GM12878 (cell line): ENCODE measurements at regions of chr5 and their contacts with region 1.

Region 1: GRCh38 chr5:131589510-131590348 is 45.3 kb downstream of the RAPGEF6 start:
- DNase-seq: peak; percentile 23
- ATAC-seq: peak; percentile 84
- H3K4me3 ChIP-seq: no peak overlapping the region
- H3K27ac ChIP-seq: no peak overlapping the region
- H3K4me1 ChIP-seq: peaks cover 2% of the 10 kb centered on the region; the same call in 1 of the 2 replicates
- H3K27me3 ChIP-seq: no peaks in the 10 kb centered on the region
- CTCF ChIP-seq: peak; percentile 83 to 85 (median 83)
- EP300 ChIP-seq: no peak
- POLR2A ChIP-seq: no peak
- RAD21 ChIP-seq: peak; percentile 96

Region 2: GRCh38 chr5:131431794-131432193 is 157.9 kb before region 1 on chr5:
- CTCF ChIA-PET with region 1: no interaction called
- POLR2A ChIA-PET with region 1: no interaction called
- RAD21 ChIA-PET with region 1: no interaction called
- SMC1A ChIA-PET with region 1: no interaction called
- in situ Hi-C with region 1: no loop called
- intact Hi-C with region 1: no loop called
- DNase-seq: no peak
- ATAC-seq: no peak
- H3K4me3 ChIP-seq: no peak overlapping the region
- H3K27ac ChIP-seq: no peak overlapping the region
- H3K4me1 ChIP-seq: no peaks in the 10 kb centered on the region
- H3K27me3 ChIP-seq: no peaks in the 10 kb centered on the region
- CTCF ChIP-seq: no peak
- EP300 ChIP-seq: no peak
- POLR2A ChIP-seq: no peak
- RAD21 ChIP-seq: no peak

Region 3: GRCh38 chr5:131564229-131564652 is 25.5 kb before region 1 on chr5:
- CTCF ChIA-PET with region 1: interaction called, 16 read pairs
- POLR2A ChIA-PET with region 1: interaction called, 3 read pairs
- RAD21 ChIA-PET with region 1: no interaction called
- SMC1A ChIA-PET with region 1: interaction called, 4 read pairs
- in situ Hi-C with region 1: no loop called
- intact Hi-C with region 1: no loop called
- DNase-seq: no peak
- ATAC-seq: no peak
- H3K4me3 ChIP-seq: no peak overlapping the region
- H3K27ac ChIP-seq: no peak overlapping the region
- H3K4me1 ChIP-seq: no peaks in the 10 kb centered on the region
- H3K27me3 ChIP-seq: no peaks in the 10 kb centered on the region
- CTCF ChIP-seq: no peak
- EP300 ChIP-seq: no peak
- POLR2A ChIP-seq: no peak
- RAD21 ChIP-seq: no peak

Region 4: DNA sequence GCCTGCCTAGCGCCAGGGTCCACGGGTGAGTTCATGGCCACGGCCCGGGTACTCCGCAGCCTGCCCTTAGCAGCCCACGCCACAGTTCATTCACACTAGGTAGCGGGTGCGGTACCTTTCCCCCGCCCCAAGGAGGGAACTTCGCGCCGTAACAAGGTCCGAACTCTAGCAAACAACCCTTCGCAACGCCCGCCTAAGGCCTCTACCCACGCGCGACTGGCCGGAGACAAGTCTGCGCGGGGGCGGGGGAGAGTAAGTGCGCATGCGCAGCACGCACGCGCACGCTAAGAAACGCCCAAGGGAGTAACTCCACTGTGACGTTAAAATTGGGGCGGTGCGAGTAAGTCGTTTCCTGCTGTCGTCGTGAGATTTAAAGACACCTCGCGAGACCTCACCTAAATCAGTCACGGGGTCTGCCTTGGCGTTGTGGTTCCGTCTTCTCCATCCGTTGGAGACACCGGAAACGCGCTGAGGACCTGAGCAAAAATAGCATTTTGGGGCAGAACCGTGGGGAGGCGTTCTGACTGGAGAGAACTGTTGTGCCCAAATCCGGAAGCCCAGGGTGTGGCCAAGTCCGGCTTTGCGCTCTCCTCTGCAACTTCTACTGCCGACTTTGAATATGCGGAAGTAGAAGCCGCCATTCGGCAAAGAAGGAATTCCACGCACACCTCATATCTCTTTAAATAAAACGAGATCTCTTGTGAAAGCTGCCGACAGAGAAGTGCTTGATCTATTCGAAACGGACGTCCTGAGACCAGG is 45.4 kb after region 1 on chr5 and contains the start of gene RAPGEF6:
- CTCF ChIA-PET with region 1: interaction called, 36 read pairs
- POLR2A ChIA-PET with region 1: interaction called, 9 read pairs
- RAD21 ChIA-PET with region 1: interaction called, 16 read pairs
- SMC1A ChIA-PET with region 1: interaction called, 24 read pairs
- in situ Hi-C with region 1: no loop called
- intact Hi-C with region 1: no loop called
- DNase-seq: peak; percentile 100
- ATAC-seq: peak; percentile 90
- H3K4me3 ChIP-seq: peak within 1 kb of the TSS; percentile 93
- H3K27ac ChIP-seq: peak within 1 kb of the TSS; percentile 98
- H3K4me1 ChIP-seq: peaks cover 20% of the 10 kb centered on the region
- H3K27me3 ChIP-seq: no peaks in the 10 kb centered on the region
- CTCF ChIP-seq: peak in 1 of 3 experiments; percentile 17; a peak in 1 of 6 replicates
- EP300 ChIP-seq: peak; percentile 49 to 80; a peak in 2 of 4 replicates
- POLR2A ChIP-seq: peak; percentile 90
- RAD21 ChIP-seq: 0 out of 2 replicates have a peak, but pooled peaks have one; percentile 7
- polyA plus RNA-seq, gene RAPGEF6: 2.9 to 4.9 TPM

Region 5: DNA sequence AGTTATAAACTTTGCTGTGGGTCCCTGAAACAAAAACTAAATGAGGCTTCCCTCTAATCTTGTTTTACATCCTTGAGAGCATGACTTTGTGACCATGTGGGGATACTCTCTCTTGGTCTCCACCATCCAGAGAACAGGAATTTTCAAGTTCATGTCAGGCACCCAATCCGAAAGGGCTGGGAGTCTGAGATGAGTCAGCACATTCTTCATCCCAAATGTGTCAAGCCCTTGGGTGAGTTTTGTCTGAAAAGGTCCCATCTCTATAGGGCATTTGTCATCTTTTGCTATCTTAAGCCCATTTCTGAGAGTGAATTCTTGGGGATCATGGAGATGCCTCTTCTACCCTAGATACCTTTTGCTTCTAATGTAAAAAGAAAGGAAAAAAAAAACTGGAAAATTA is 72.2 kb after region 1 on chr5:
- CTCF ChIA-PET with region 1: interaction called, 10 read pairs
- POLR2A ChIA-PET with region 1: no interaction called
- RAD21 ChIA-PET with region 1: interaction called, 5 read pairs
- SMC1A ChIA-PET with region 1: interaction called, 9 read pairs
- in situ Hi-C with region 1: no loop called
- intact Hi-C with region 1: no loop called
- DNase-seq: no peak
- ATAC-seq: no peak
- H3K4me3 ChIP-seq: no peak overlapping the region
- H3K27ac ChIP-seq: no peak overlapping the region
- H3K4me1 ChIP-seq: no peaks in the 10 kb centered on the region
- H3K27me3 ChIP-seq: no peaks in the 10 kb centered on the region
- CTCF ChIP-seq: no peak
- EP300 ChIP-seq: no peak
- POLR2A ChIP-seq: no peak
- RAD21 ChIP-seq: no peak

Region 6: DNA sequence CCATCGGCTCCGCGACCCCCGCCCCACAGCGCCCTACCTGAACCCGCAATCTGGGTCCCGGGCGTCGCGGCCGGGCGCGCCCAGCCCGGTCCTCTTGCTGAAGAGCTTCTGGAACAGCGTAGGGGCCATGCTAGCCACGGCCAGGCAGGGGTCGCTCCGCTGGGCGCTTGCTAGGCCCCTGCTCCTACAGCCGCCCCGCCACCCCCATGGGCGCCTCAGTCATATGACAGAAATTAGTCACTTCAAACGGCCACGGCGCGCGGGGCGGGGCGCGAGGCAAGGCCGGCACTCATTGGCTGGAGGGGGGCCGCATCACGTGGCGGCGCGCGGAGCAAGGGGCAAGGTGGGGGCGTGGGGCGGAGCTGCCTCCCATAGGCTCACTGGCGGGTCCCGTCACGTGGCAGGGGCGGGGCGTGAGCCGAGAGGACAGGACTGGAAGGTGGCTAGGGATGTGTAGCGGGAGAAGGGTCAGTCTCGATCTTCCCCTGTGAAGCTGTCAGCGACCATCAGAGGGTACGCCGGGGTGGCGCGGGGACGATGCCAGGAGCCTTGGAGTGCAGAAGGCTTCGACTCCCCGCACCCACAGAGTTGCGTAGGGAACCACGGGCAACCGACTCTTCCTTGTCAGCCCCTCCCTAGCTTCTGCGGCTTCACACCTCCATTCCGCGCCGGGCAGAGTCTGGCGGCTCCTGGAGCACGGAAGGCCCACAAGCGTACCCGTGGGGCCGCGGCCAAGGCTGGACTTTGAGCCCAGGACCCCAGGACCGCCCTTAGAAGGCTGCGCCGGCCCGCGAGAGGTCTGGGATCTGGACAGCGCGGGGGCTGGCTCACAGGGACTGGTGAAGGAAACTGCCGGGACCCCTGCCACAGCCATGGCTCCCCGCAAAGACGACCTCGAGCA is 207.3 kb after region 1 on chr5 and contains the start of gene FNIP1:
- CTCF ChIA-PET with region 1: interaction called, 6 read pairs
- POLR2A ChIA-PET with region 1: no interaction called
- RAD21 ChIA-PET with region 1: interaction called, 7 read pairs
- SMC1A ChIA-PET with region 1: interaction called, 5 read pairs
- in situ Hi-C with region 1: no loop called
- intact Hi-C with region 1: loop called (anchors 2 kb)
- DNase-seq: peak; percentile 86
- ATAC-seq: peak; percentile 93
- H3K4me3 ChIP-seq: peak within 1 kb of the TSS; percentile 86
- H3K27ac ChIP-seq: peak within 1 kb of the TSS; percentile 93
- H3K4me1 ChIP-seq: peaks cover 6% of the 10 kb centered on the region
- H3K27me3 ChIP-seq: no peaks in the 10 kb centered on the region
- CTCF ChIP-seq: no peak
- EP300 ChIP-seq: 0 out of 4 replicates have a peak, but pooled peaks of 1 of the 2 experiments have one; percentile 29
- POLR2A ChIP-seq: peak; percentile 97
- RAD21 ChIP-seq: no peak
- polyA plus RNA-seq, gene FNIP1: 4.3 to 7.0 TPM

Region 7: GRCh38 chr5:131846536-131846935 is 256.8 kb after region 1 on chr5:
- CTCF ChIA-PET with region 1: no interaction called
- POLR2A ChIA-PET with region 1: no interaction called
- RAD21 ChIA-PET with region 1: no interaction called
- SMC1A ChIA-PET with region 1: no interaction called
- in situ Hi-C with region 1: no loop called
- intact Hi-C with region 1: no loop called
- DNase-seq: no peak
- ATAC-seq: no peak
- H3K4me3 ChIP-seq: no peak overlapping the region
- H3K27ac ChIP-seq: no peak overlapping the region
- H3K4me1 ChIP-seq: no peaks in the 10 kb centered on the region
- H3K27me3 ChIP-seq: no peaks in the 10 kb centered on the region
- CTCF ChIP-seq: no peak
- EP300 ChIP-seq: no peak
- POLR2A ChIP-seq: no peak
- RAD21 ChIP-seq: no peak

Region 8: GRCh38 chr5:132055808-132056609 is 466.3 kb after region 1 on chr5:
- CTCF ChIA-PET with region 1: interaction called, 72 read pairs
- POLR2A ChIA-PET with region 1: no interaction called
- RAD21 ChIA-PET with region 1: interaction called, 12 read pairs
- SMC1A ChIA-PET with region 1: interaction called, 6 read pairs
- in situ Hi-C with region 1: no loop called
- intact Hi-C with region 1: no loop called
- DNase-seq: no peak
- ATAC-seq: peak; percentile 24; the same call in 2 of the 3 replicates
- H3K4me3 ChIP-seq: no peak overlapping the region
- H3K27ac ChIP-seq: no peak overlapping the region
- H3K4me1 ChIP-seq: no peaks in the 10 kb centered on the region
- H3K27me3 ChIP-seq: peaks cover 0 to 2% of the 10 kb centered on the region in 2 experiments; a peak in 3 of 4 replicates
- CTCF ChIP-seq: no peak
- EP300 ChIP-seq: no peak
- POLR2A ChIP-seq: no peak
- RAD21 ChIP-seq: no peak

Region 9: DNA sequence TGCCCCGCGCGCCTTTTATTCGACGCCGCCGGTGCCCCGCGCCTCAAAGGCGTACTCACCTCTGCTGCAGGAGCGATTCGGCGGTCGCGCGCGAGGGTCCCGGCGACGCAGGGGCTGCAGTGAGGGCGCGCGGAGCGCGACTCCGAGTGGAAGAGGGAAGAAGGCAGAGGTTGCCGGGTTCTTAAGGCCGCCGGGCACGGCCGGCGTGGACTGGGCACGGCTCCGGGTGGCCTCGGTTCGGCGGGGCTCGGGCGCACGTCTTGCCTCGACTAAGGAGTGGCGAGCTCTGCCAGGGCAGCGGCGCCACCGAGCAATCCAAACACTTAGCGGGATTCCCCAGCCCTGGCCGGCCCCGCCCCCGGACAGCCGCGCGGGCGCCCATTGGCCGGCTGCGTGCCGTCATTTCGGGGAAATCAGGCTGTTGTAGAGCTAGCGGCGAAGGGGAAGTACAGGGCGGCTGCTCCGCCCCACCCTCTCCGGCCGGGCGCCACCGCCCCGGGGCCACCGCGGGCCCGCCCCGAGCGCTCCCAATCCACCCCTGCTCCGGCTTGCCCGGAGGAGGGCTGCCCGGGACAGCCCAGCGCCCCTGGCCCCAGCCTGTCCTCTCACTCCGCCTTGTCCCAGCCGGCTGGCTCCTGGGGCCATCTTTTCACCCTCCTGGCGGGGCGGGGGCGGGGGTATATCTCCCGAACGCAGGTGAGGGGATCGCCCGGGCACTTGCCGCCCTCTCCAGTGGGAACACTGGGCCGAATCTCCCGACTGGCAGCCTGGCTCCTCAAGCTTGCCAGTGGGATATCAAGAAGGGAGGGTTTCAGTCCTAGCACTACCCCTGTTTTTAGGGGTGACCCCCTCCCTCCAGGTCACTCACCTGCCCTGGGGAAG is 901.0 kb after region 1 on chr5 and contains the start of gene IRF1:
- CTCF ChIA-PET with region 1: no interaction called
- POLR2A ChIA-PET with region 1: no interaction called
- RAD21 ChIA-PET with region 1: no interaction called
- SMC1A ChIA-PET with region 1: no interaction called
- in situ Hi-C with region 1: no loop called
- intact Hi-C with region 1: no loop called
- DNase-seq: no peak
- ATAC-seq: peak; percentile 80
- H3K4me3 ChIP-seq: peak within 1 kb of the TSS; percentile 98
- H3K27ac ChIP-seq: peak within 1 kb of the TSS; percentile 97
- H3K4me1 ChIP-seq: peaks cover 52% of the 10 kb centered on the region
- H3K27me3 ChIP-seq: no peaks in the 10 kb centered on the region
- CTCF ChIP-seq: 0 out of 6 replicates have a peak, but pooled peaks of 2 of the 3 experiments have one; percentile 3 to 7
- EP300 ChIP-seq: 0 out of 4 replicates have a peak, but pooled peaks of 1 of the 2 experiments have one; percentile 1
- POLR2A ChIP-seq: peak; percentile 94
- RAD21 ChIP-seq: 0 out of 2 replicates have a peak, but pooled peaks have one; percentile 0
- polyA plus RNA-seq, gene IRF1: 6.9 to 14.0 TPM